IMR-90 (cell line): ENCODE measurements at regions of chr7 and their contacts with region 1.

Region 1: GRCh38 chr7:103560136-103560535 is 114.1 kb upstream of the SLC26A5 start:
- DNase-seq: no peak
- ATAC-seq: no peak
- H3K4me3 ChIP-seq: no peak overlapping the region
- H3K27ac ChIP-seq: no peak overlapping the region
- H3K4me1 ChIP-seq: peaks cover 2% of the 10 kb centered on the region; the same call in 1 of the 2 replicates
- H3K27me3 ChIP-seq: no peaks in the 10 kb centered on the region
- CTCF ChIP-seq: no peak
- POLR2A ChIP-seq: no peak
- RAD21 ChIP-seq: no peak

Region 2: DNA sequence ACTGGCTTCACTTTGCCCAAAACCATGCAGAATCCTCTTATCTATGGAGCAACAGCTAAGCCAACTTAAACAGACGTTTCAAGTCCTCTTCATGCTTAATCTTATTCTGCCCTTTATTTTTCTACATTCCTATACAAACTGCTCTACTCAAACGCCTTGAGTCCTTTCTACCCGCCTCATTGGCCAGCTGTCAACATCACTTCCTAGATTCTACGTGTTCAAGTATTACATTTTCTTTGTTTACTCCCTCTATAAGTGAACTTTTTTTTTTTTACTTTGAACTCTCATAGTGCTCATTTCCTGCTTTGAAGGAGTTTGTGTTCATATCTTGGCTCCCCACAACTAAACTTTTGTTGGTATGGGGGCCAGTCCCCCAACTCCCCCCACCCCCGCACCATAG is 85.2 kb before region 1 on chr7:
- CTCF ChIA-PET with region 1: no interaction called
- POLR2A ChIA-PET with region 1: no interaction called
- dilution Hi-C with region 1: no loop called
- in situ Hi-C with region 1: no loop called
- intact Hi-C with region 1: no loop called
- DNase-seq: no peak
- ATAC-seq: no peak
- H3K4me3 ChIP-seq: no peak overlapping the region
- H3K27ac ChIP-seq: no peak overlapping the region
- H3K4me1 ChIP-seq: no peaks in the 10 kb centered on the region
- H3K27me3 ChIP-seq: no peaks in the 10 kb centered on the region
- CTCF ChIP-seq: no peak
- POLR2A ChIP-seq: no peak
- RAD21 ChIP-seq: no peak

Region 3: DNA sequence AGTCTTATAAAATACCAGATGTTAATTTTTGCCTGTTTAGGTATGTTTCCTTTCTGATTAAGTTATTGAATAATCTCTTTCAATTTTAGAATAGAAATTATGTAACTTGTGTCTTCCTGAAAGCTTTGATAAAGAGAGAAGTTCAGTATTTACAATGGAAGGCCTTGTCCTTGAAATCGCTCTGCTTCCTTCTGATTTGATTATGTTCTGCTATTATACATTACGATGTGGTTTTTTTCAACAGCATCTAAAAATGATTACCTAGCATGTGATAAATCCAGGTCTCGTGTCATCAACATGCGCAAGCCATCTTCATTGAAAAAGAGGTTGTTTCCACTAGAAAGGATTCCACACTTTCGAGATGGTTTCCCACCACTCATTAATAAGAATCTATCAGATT is 17.7 kb before region 1 on chr7:
- CTCF ChIA-PET with region 1: interaction called, 4 read pairs
- POLR2A ChIA-PET with region 1: no interaction called
- dilution Hi-C with region 1: no loop called
- in situ Hi-C with region 1: no loop called
- intact Hi-C with region 1: loop called (anchors 2 kb)
- DNase-seq: no peak
- ATAC-seq: no peak
- H3K4me3 ChIP-seq: no peak overlapping the region
- H3K27ac ChIP-seq: no peak overlapping the region
- H3K4me1 ChIP-seq: 0 out of 2 replicates have a peak, but pooled peaks cover 1% of the 10 kb centered on the region
- H3K27me3 ChIP-seq: no peaks in the 10 kb centered on the region
- CTCF ChIP-seq: no peak
- POLR2A ChIP-seq: no peak
- RAD21 ChIP-seq: no peak

Region 4: DNA sequence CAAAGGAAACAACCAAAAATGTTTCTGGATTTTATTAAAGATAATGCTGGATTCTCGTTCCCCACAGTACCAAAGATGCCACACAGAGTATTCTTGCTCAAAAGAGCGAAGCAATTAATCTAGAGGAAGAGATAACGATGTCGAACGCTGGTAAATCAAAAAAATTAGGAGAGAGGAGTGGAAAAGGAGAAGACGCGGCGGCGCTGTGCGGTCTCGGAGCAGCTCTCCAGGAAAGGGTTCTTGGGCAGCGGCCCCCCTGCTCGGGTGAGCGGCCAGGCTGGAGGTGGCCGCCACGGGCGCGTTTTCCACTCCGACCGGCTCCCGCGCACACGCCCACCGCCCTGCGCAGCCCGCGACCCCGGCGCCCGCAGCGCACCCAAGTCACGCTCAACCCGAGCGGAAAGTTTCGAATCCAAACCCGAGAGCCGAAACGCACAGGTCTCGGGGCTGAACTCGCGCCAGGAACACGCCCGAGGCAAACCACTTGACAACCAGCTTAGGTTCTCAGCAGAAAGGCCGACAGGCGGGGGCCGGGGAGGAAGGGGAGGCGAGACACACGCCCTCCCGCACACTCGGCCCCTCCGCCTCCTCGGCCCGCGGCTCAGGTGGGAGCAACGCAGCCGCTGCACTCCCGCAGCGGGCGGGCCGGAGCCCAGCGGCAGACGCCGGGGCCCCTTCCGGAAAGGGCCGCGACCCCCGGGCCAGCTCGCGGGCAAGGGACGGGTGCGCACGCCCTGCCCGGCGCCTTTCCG is 1827.7 kb after region 1 on chr7:
- CTCF ChIA-PET with region 1: no interaction called
- POLR2A ChIA-PET with region 1: no interaction called
- dilution Hi-C with region 1: no loop called
- in situ Hi-C with region 1: no loop called
- intact Hi-C with region 1: no loop called
- DNase-seq: peak; percentile 28
- ATAC-seq: peak; percentile 52
- H3K4me3 ChIP-seq: peak overlapping the region; percentile 92
- H3K27ac ChIP-seq: peak overlapping the region; percentile 45
- H3K4me1 ChIP-seq: no peaks in the 10 kb centered on the region
- H3K27me3 ChIP-seq: no peaks in the 10 kb centered on the region
- CTCF ChIP-seq: no peak
- POLR2A ChIP-seq: no peak
- RAD21 ChIP-seq: no peak